Prostate gland (tissue), 2 donors: ENCODE measurements at regions of chr4 and their contacts with region 1.

Region 1: DNA sequence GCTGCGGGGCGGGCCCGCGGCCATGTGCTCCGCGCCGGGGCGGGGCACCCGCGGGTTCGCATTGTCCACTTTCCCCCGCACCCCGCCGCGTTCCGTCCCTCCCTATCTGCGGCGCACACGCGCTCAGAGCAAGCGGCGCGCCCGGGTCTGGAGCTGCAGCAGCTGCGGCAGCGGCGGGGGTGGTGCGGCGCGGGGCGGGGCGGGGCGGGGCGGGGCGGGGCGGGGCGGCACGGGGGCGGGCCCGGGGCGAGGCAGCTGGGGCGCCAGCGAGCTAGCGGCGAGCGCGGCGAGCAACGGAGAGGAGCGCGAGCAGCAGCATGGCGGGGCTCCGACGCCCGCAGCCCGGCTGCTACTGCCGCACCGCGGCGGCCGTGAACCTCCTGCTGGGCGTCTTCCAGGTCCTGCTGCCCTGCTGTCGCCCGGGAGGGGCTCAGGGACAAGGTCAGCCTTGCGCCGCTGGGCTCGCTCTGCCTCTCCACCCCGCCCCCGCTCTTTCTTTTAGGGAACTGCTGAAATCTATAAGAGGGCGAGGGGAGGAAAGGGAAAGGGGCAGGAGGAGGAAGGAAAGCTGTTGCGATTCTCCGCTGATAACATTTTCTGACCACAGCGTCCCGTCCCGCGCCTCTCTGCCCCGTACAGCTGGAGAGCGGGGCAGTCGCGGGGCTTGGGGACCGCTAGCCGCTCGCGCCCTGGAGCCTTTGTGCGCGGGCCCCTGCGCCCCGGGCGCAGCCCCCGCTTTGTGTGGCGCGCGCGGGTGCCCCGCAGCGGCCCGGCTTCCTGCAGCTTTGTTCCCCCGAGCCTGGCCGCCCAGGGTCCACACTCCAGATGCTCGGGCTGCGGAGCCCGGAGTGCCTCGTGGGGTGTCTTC is at the start of gene TMEM131L:
- DNase-seq: peak; percentile 51
- H3K4me3 ChIP-seq: peak within 1 kb of the TSS; percentile 64 to 81
- H3K27ac ChIP-seq: peak within 1 kb of the TSS; percentile 58 to 69
- H3K4me1 ChIP-seq: no peaks in the 10 kb centered on the region
- H3K27me3 ChIP-seq: no peaks in the 10 kb centered on the region
- CTCF ChIP-seq: peak in 2 of 4 experiments; percentile 16 to 23
- POLR2A ChIP-seq: no peak
- total RNA-seq, gene TMEM131L: 9.3 to 12.5 TPM

Region 2: DNA sequence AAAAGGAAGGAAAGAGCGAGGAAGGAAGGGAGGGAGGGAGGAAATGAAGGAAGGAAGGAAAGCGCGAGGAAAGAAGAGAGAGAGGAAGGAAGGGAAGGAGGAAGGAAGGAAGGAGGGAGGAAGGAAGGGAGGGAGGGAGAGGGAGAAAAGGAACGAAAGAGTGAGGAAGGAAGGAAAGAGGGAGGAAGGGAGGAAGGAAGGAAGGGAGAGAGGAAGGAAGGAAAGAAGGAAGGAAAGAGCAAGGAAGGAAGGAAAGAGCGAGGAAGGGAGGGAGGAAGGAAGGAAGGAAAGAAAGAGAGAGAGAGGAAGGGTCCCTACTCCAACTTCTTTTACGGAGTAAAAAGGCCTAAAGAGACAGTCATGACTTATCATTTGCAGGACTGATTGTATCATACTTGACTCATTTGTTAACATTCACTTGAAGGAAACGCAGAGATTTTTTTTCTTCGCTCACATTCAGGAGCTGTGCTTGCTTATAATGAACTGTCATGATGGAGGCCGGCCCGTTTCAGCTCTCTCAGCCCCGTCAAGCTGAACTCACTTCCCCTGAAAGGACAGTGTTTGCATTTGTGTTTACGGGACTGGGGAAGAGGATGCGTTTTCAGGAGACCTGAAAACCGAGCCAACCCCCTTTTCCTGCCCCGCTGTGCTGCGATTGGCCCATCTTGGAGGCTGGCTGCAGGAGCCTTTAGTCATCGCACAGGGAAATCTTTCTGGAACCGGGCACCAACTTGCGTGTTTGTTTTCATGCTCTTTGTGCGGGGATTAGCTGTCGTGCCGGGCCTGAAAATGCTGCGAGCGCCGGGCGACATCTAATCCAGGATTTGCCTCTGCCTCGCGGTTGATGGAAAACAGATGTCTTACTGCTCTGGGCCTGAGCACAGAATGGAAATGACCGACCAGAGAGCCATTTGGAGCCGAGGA is 244.3 kb before region 1 on chr4:
- intact Hi-C with region 1: loop called (anchors 10 kb)
- DNase-seq: peak; percentile 70
- H3K4me3 ChIP-seq: peak overlapping the region; percentile 52 to 59
- H3K27ac ChIP-seq: peak overlapping the region; percentile 87 to 89
- H3K4me1 ChIP-seq: no peaks in the 10 kb centered on the region
- H3K27me3 ChIP-seq: no peaks in the 10 kb centered on the region
- CTCF ChIP-seq: no peak
- POLR2A ChIP-seq: peak; percentile 61

Region 3: DNA sequence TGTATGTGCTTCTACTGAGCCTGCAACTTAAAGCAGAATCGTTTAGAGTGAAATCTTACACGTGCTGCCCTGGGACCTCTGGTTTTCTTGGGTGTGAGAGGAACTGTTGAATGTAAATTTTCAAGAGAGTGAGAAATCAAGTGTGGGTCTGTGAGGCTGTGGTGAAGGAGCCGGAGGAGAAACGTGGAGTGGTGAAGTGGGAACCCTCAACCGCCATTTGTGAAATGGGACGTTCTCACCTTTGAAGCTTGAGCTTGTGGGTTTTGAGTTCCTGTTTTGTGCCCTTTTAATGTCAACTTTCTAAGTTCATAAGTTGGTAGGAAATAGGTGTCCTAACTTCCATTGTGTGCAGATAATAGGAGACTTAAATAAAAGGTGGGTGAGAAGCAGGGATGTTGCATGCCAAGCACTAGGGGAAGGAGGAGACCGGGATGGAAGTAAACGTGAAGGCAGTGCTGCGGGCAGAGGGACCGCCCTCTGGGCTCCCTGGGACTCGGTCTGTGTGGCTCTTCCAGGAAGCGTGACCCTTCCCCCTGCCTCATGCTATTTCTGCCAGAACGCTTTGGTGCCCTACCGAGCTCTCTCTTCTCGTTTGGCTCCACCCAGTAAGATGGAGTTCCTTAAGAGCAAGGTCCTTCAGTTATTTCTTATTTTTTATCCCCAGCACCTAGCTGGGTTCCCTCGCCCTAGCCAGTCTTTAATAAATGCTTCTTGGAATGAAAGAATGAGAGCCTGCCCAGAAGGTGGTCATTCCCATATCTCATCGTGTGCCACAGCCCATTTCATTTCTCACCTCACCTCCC is 55.9 kb after region 1 on chr4:
- intact Hi-C with region 1: no loop called
- DNase-seq: no peak
- H3K4me3 ChIP-seq: no peak overlapping the region
- H3K27ac ChIP-seq: no peak overlapping the region
- H3K4me1 ChIP-seq: no peaks in the 10 kb centered on the region
- H3K27me3 ChIP-seq: no peaks in the 10 kb centered on the region
- CTCF ChIP-seq: no peak
- POLR2A ChIP-seq: no peak

Region 4: DNA sequence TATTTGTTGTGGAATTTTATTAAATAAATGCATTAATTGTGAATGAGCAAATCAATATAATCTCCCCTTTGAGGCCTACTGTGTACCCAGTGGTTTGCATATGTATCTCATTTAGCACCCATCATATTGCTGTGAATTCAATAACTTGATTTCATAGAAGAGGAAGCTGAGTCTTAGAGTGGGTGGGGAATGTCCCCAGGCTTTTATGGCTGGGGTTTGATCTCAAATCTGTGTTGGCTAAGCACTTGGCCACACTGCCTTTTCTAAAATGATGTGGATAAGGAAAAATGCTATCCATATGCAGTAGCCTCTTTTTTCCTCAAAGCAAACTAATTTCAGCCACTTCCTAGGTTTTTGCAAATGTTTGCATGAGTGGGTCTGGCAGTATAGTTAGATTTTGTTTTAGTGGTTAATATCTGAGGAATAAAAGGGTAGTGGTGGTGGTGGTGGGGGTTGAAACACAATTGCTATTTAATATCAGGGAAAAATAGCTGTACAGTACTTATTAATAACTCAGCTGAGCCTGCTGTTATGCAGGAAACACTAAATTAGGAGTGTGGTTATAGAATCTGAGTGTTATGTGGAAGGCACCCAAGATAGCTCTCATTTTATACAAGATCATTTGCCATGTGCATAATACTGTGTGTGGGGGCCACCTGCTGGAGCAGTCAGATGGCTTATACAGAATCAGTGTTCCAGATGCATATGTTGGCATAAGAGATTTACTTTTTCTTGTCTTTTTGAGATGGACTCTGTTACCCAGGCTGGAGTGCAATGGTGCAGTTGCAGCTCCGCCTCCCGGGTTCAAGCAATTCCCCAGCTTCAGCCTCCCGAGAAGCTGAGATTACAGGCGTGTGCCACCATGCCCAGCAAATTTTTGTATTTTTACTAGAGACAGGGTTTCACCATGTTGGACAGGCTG is 107.8 kb after region 1 on chr4:
- intact Hi-C with region 1: loop called (anchors 2 kb)
- DNase-seq: peak; percentile 58
- H3K4me3 ChIP-seq: no peak overlapping the region
- H3K27ac ChIP-seq: no peak overlapping the region
- H3K4me1 ChIP-seq: no peaks in the 10 kb centered on the region
- H3K27me3 ChIP-seq: no peaks in the 10 kb centered on the region
- CTCF ChIP-seq: peak in 3 of 4 experiments; percentile 61 to 71 (median 69)
- POLR2A ChIP-seq: no peak

Region 5: DNA sequence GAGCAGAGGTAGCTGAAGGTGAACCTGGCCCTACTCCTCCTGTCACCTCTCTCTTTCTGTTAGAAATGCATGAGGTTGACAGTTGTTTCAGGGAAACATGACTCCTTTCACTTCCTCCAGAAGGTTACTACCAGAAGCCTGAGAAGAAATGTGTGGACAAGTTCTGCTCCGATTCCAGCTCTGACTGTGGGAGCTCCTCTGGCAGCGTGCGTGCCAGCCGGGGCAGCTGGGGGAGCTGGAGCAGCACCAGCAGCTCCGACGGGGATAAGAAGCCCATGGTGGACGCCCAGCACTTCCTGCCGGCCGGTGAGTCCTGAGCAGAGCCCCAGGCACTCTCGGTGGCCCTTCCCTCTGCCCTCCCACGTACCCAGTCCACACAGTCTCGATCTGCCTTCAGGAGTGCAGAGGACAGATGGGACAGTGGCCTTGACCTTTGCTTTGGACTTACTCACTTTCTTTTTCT is 156.5 kb after region 1 on chr4:
- intact Hi-C with region 1: no loop called
- DNase-seq: no peak
- H3K4me3 ChIP-seq: no peak overlapping the region
- H3K27ac ChIP-seq: no peak overlapping the region
- H3K4me1 ChIP-seq: no peaks in the 10 kb centered on the region
- H3K27me3 ChIP-seq: no peaks in the 10 kb centered on the region
- CTCF ChIP-seq: no peak
- POLR2A ChIP-seq: no peak